CD4-positive, alpha-beta memory T cell (primary cell): ENCODE measurements at regions of chr5 and their contacts with region 1.

Region 1: DNA sequence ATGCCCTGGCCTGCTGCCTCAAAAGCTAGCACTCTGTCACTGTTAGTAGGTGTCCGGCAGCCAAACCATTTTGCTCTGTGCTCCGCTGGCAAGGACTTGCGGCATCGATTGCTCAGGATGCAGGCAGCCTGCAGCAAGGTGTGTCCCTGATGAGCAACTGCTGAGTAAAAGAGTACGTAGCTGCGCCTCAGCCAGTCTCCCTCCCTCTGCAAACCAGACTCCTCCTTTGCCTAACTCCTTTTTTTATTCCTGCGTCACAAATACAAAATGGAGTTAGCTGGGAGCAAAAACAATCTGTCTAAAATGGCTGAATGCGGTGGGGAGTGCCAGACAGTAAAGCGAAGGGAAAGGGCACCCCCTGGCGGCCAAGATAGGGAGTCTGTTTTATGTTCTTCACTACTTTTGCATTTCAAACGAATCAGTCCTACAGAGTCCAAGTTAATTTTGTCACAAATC is 61.1 kb downstream of the DIAPH1 start:
- DNase-seq: peak; percentile 77 to 82 (median 79)
- H3K4me3 ChIP-seq: no peak overlapping the region
- H3K4me3 Mint-ChIP-seq: peak overlapping the region in 4 of 8 donors; percentile 12 to 63 (median 21)
- H3K27ac ChIP-seq: peak overlapping the region; percentile 44
- H3K27ac Mint-ChIP-seq: peak overlapping the region; percentile 76 to 94 (median 93)
- H3K4me1 ChIP-seq: peaks cover 21% of the 10 kb centered on the region
- H3K4me1 Mint-ChIP-seq: peaks cover 26 to 36% (median 34%) of the 10 kb centered on the region in 4 donors
- H3K27me3 ChIP-seq: no peaks in the 10 kb centered on the region
- H3K27me3 Mint-ChIP-seq: no peaks in the 10 kb centered on the region

Region 2: DNA sequence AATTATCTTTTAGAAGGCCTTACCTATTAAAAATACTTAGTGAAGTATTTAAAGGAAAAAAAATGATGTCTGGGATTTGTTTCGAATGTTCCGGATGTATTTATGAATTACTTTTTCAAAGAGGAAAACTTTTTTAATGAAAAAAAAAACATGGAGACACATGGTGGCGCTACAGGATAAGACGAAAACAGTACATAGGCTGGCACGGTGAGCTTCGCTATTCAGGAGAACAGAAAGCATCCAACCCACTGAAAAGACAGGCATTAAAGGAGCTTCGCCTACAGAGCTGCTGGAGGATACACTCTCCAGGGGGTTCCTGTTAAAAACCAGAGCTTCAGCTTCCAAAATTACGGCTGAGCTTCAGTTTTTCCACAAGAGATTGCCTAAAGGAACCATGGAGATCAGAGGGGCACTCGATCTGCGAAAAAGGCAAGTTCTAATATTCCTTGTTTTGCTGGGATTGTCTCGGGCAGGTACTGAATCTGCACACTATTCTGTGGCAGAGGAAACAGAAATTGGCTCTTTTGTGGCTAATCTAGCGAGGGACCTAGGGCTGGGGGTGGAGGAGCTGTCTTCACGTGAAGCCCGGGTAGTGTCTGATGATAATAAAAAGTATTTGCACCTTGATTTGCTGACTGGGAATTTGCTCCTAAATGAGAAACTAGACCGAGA is 334.5 kb before region 1 on chr5 and contains the start of gene PCDHB14:
- CTCF ChIA-PET with region 1: interaction called, 19 read pairs
- POLR2A ChIA-PET with region 1: no interaction called
- intact Hi-C with region 1: no loop called
- DNase-seq: peak in 1 of 5 donors; percentile 12
- H3K4me3 ChIP-seq: no peak within 1 kb of the TSS
- H3K4me3 Mint-ChIP-seq: peak within 1 kb of the TSS; percentile 8 to 68 (median 42)
- H3K27ac ChIP-seq: no peak within 1 kb of the TSS
- H3K27ac Mint-ChIP-seq: peak within 1 kb of the TSS in 1 of 7 donors; percentile 5
- H3K4me1 ChIP-seq: no peaks in the 10 kb centered on the region
- H3K4me1 Mint-ChIP-seq: peaks cover 0 to 6% (median 2%) of the 10 kb centered on the region in 4 donors
- H3K27me3 ChIP-seq: peaks cover 12% of the 10 kb centered on the region
- H3K27me3 Mint-ChIP-seq: peaks cover 30 to 47% of the 10 kb centered on the region in 2 donors
- total RNA-seq, gene PCDHB14: 0.14 to 0.15 TPM

Region 3: GRCh38 chr5:141272906-141273305 is 284.8 kb before region 1 on chr5:
- CTCF ChIA-PET with region 1: no interaction called
- POLR2A ChIA-PET with region 1: no interaction called
- intact Hi-C with region 1: no loop called
- DNase-seq: no peak
- H3K4me3 ChIP-seq: no peak overlapping the region
- H3K4me3 Mint-ChIP-seq: peak overlapping the region in 1 of 8 donors; percentile 21
- H3K27ac ChIP-seq: no peak overlapping the region
- H3K27ac Mint-ChIP-seq: no peak overlapping the region
- H3K4me1 ChIP-seq: no peaks in the 10 kb centered on the region
- H3K4me1 Mint-ChIP-seq: no peaks in the 10 kb centered on the region
- H3K27me3 ChIP-seq: no peaks in the 10 kb centered on the region
- H3K27me3 Mint-ChIP-seq: no peaks in the 10 kb centered on the region

Region 4: DNA sequence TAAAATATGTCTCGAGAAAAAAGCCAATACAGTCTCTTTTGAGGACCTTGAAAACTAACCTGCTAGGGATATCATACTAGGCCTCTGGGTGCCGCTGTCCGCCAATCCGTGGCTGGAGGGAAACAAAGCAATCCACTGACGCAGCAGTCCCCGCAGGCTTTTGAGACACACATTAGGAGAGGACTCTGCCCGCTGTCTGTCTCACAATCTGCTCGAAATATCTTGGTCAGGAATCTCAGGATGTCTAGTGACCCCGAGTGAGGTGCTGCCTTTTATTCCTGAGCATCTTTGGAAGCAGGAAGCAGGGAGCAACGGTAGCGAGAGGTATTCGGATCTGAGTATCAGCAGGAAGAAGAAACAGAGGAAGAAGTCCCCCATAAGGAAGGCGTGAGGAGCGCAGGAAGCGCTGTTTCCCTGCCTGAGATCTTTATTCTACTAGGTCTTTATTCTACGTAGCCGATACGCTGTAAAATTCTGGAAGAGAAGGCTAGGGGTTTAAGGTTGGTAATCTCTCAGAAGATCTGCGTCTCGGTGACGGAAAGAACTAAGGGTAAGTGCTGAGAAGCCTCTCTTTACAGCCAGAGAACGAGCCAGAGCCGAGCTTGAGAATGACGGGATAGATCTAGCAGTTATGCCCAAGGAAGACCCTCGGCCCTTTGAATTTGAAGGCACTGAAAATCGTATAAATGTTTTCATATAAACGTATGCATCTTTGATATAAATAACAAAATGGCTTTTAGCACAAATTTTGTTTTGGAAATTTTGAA is 231.4 kb before region 1 on chr5:
- CTCF ChIA-PET with region 1: interaction called, 3 read pairs
- POLR2A ChIA-PET with region 1: no interaction called
- intact Hi-C with region 1: loop called (anchors 1 kb)
- DNase-seq: peak; percentile 67 to 80 (median 71)
- H3K4me3 ChIP-seq: peak overlapping the region; percentile 26 to 50
- H3K4me3 Mint-ChIP-seq: peak overlapping the region; percentile 91 to 97 (median 94)
- H3K27ac ChIP-seq: peak overlapping the region; percentile 37
- H3K27ac Mint-ChIP-seq: peak overlapping the region; percentile 36 to 98 (median 94)
- H3K4me1 ChIP-seq: peaks cover 2% of the 10 kb centered on the region
- H3K4me1 Mint-ChIP-seq: peaks cover 5 to 11% (median 8%) of the 10 kb centered on the region in 4 donors
- H3K27me3 ChIP-seq: no peaks in the 10 kb centered on the region
- H3K27me3 Mint-ChIP-seq: peaks cover 23 to 28% of the 10 kb centered on the region in 2 donors

Region 5: GRCh38 chr5:141369994-141370848 is 187.5 kb before region 1 on chr5 and contains the start of gene PCDHGB3:
- CTCF ChIA-PET with region 1: interaction called, 14 read pairs
- POLR2A ChIA-PET with region 1: no interaction called
- intact Hi-C with region 1: no loop called
- DNase-seq: peak in 4 of 5 donors; percentile 30 to 49 (median 37)
- H3K4me3 ChIP-seq: peak within 1 kb of the TSS in 1 of 2 donors; percentile 15
- H3K4me3 Mint-ChIP-seq: peak within 1 kb of the TSS; percentile 69 to 89 (median 83)
- H3K27ac ChIP-seq: no peak within 1 kb of the TSS
- H3K27ac Mint-ChIP-seq: peak within 1 kb of the TSS in 1 of 7 donors; percentile 68
- H3K4me1 ChIP-seq: peaks cover 6% of the 10 kb centered on the region
- H3K4me1 Mint-ChIP-seq: peaks cover 4 to 11% (median 8%) of the 10 kb centered on the region in 4 donors
- H3K27me3 ChIP-seq: peaks cover 20% of the 10 kb centered on the region
- H3K27me3 Mint-ChIP-seq: peaks cover 43 to 46% of the 10 kb centered on the region in 2 donors
- total RNA-seq, gene PCDHGB3: 0.50 to 0.76 TPM

Region 6: GRCh38 chr5:141524604-141525597 is 32.8 kb before region 1 on chr5:
- CTCF ChIA-PET with region 1: interaction called, 22 read pairs
- POLR2A ChIA-PET with region 1: no interaction called
- intact Hi-C with region 1: no loop called
- DNase-seq: peak; percentile 46 to 62 (median 51)
- H3K4me3 ChIP-seq: no peak overlapping the region
- H3K4me3 Mint-ChIP-seq: no peak overlapping the region
- H3K27ac ChIP-seq: no peak overlapping the region
- H3K27ac Mint-ChIP-seq: peak overlapping the region in 5 of 7 donors; percentile 26 to 72 (median 57)
- H3K4me1 ChIP-seq: peaks cover 15% of the 10 kb centered on the region
- H3K4me1 Mint-ChIP-seq: peaks cover 11 to 28% (median 21%) of the 10 kb centered on the region in 4 donors
- H3K27me3 ChIP-seq: no peaks in the 10 kb centered on the region
- H3K27me3 Mint-ChIP-seq: no peaks in the 10 kb centered on the region